Activated CD4-positive, alpha-beta memory T cell treated with anti-CD3 and anti-CD28 coated beads, Interleukin-2, amount 10 ng/mL, durations not matched to agents 7 days and 5 days (primary cell): ENCODE measurements at regions of chr5 and their contacts with region 1.

Region 1: DNA sequence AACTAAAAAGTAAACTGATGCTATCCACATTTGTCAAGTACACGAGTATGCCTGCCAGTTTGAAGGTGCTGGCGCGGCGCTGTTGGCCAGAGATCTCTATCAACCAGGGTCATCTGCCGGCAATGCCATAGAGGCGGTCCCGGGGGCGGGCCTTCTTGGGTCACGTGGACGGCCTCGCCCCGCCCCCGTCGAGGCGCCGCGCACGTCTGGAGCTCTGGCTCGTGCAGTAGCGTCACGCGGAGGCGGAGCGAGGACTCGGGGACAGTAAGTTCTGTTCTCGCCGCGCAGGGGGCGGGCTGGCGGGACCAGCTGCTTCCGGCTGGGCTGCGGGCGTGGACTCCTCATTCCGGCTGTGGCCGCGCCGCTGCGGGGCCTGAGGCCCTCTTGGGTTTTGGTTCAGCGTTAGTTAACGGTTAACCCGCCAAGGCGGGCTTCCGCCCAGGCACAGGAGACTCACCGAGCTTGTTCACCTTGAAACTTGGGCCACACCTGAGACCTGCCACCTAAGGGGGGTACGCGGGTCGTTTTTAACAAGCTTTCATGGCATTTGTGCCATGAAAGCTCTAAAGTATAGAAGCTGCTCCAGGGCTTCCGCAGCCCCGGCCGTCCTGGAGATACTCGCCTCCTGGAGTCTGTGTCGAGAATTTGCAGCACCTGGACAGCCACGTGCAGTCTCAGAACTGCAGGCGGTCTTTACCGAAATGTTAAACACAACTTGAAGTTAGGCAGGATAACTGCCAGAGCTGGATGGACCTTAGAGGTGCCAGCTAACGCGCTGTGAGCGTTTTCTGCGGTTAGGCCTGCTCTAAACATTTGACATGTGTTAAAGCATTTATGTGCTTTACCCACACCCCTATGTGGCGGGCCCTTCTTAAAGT is at the start of gene RFESD:
- DNase-seq: peak; percentile 98
- H3K4me3 Mint-ChIP-seq: peak within 1 kb of the TSS; percentile 79
- H3K27ac Mint-ChIP-seq: peak within 1 kb of the TSS; percentile 88
- H3K4me1 Mint-ChIP-seq: peaks cover 45% of the 10 kb centered on the region
- H3K27me3 Mint-ChIP-seq: no peaks in the 10 kb centered on the region
- total RNA-seq, gene RFESD: 5.4 to 6.4 TPM

Region 2: DNA sequence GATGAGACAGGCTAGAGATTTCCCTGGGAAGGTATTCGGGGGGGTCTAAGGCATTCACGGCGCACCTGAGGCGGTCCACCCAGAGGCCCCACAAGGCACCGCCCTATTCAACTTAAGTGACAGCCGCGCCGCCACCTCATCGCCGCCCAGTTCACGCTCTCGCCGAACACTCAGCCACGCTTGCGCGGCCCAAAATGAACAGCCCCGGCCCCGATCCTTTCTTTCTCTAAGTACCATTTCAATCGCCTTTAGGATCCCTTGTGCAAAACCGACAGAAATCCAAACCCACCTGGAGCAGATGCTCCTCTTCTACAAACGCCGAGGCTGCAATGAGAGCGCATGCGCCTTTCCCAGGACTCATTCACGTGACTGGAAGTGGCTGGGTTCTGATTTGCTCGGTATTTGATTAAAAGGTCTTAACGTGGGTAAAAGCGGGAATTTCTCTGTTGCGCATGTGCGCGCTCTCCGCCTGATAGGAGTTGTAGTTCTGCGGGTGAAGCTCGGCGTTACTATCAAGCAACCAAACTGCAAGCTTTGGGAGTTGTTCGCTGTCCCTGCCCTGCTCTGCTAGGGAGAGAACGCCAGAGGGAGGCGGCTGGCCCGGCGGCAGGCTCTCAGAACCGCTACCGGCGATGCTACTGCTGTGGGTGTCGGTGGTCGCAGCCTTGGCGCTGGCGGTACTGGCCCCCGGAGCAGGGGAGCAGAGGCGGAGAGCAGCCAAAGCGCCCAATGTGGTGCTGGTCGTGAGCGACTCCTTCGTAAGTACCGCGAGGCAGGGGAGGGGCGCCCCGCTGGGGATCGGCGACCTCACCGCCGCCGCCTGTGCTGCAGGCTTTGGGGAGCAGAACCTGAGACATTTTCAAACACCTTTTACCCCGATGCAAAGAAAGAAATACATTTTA is 91.9 kb before region 1 on chr5 and contains the starts of genes ARSK and SKIC3:
- CTCF ChIA-PET with region 1: interaction called, 5 read pairs
- POLR2A ChIA-PET with region 1: interaction called, 11 read pairs
- DNase-seq: peak; percentile 92
- H3K4me3 Mint-ChIP-seq: peak within 1 kb of the TSS; percentile 88
- H3K27ac Mint-ChIP-seq: peak within 1 kb of the TSS; percentile 74
- H3K4me1 Mint-ChIP-seq: peaks cover 42% of the 10 kb centered on the region
- H3K27me3 Mint-ChIP-seq: no peaks in the 10 kb centered on the region
- total RNA-seq, gene ARSK: 4.4 to 4.8 TPM
- total RNA-seq, gene SKIC3: 70.7 to 72.1 TPM

Region 3: DNA sequence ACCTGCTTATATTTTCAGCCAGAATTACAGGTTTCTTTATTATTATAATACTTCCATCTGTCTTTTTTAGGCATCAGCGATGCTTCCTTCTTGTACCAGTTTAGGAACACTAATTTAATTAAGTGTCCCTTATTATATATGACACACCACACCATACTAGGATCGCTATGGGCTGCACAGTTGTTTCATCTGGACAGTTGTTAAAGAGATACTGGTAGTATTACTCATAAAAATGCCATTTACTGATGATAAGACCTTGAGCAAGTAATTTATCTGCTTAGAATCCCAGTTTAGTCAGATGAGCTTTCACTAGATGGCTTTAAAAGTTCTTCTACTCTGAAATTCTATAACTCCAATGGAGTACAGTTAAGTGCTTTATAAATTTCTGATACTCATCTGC is 74.8 kb before region 1 on chr5:
- CTCF ChIA-PET with region 1: no interaction called
- POLR2A ChIA-PET with region 1: no interaction called
- DNase-seq: no peak
- H3K4me3 Mint-ChIP-seq: no peak overlapping the region
- H3K27ac Mint-ChIP-seq: no peak overlapping the region
- H3K4me1 Mint-ChIP-seq: no peaks in the 10 kb centered on the region
- H3K27me3 Mint-ChIP-seq: no peaks in the 10 kb centered on the region

Region 4: DNA sequence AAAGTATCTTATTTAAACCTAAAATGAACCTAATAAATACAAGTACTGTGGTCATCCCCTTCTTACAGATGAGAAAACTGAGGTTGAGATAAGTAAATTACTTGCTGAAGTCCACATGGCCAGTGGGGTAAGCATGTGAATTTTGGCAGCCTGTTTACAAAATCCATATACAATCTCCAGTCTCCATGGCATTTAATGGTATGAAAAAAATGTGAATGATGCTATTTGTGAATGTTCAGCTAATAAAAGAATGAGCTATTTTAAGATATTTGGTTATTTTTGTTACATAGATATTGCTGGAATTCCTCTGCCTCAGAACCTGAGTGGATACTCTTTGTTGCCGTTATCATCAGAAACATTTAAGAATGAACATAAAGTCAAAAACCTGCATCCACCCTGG is 46.2 kb before region 1 on chr5:
- CTCF ChIA-PET with region 1: no interaction called
- POLR2A ChIA-PET with region 1: no interaction called
- DNase-seq: no peak
- H3K4me3 Mint-ChIP-seq: no peak overlapping the region
- H3K27ac Mint-ChIP-seq: no peak overlapping the region
- H3K4me1 Mint-ChIP-seq: no peaks in the 10 kb centered on the region
- H3K27me3 Mint-ChIP-seq: no peaks in the 10 kb centered on the region

Region 5: GRCh38 chr5:95631991-95632675 is 14.7 kb before region 1 on chr5:
- CTCF ChIA-PET with region 1: interaction called, 13 read pairs
- POLR2A ChIA-PET with region 1: interaction called, 19 read pairs
- DNase-seq: peak; percentile 82
- H3K4me3 Mint-ChIP-seq: peak overlapping the region; percentile 1
- H3K27ac Mint-ChIP-seq: peak overlapping the region; percentile 95
- H3K4me1 Mint-ChIP-seq: peaks cover 23% of the 10 kb centered on the region
- H3K27me3 Mint-ChIP-seq: peaks cover 12% of the 10 kb centered on the region

Region 6: GRCh38 chr5:95672486-95673469 is 26.0 kb after region 1 on chr5:
- CTCF ChIA-PET with region 1: no interaction called
- POLR2A ChIA-PET with region 1: no interaction called
- DNase-seq: no peak
- H3K4me3 Mint-ChIP-seq: no peak overlapping the region
- H3K27ac Mint-ChIP-seq: no peak overlapping the region
- H3K4me1 Mint-ChIP-seq: peaks cover 3% of the 10 kb centered on the region
- H3K27me3 Mint-ChIP-seq: peaks cover 21% of the 10 kb centered on the region

Region 7: GRCh38 chr5:95760273-95761191 is 113.7 kb after region 1 on chr5:
- CTCF ChIA-PET with region 1: interaction called, 7 read pairs
- POLR2A ChIA-PET with region 1: interaction called, 10 read pairs
- DNase-seq: no peak
- H3K4me3 Mint-ChIP-seq: peak overlapping the region; percentile 72
- H3K27ac Mint-ChIP-seq: peak overlapping the region; percentile 84
- H3K4me1 Mint-ChIP-seq: peaks cover 32% of the 10 kb centered on the region
- H3K27me3 Mint-ChIP-seq: peaks cover 16% of the 10 kb centered on the region

Region 8: GRCh38 chr5:95822542-95823181 is 175.9 kb after region 1 on chr5 and contains the start of gene GLRX:
- CTCF ChIA-PET with region 1: interaction called, 9 read pairs
- POLR2A ChIA-PET with region 1: interaction called, 23 read pairs
- DNase-seq: peak; percentile 72
- H3K4me3 Mint-ChIP-seq: peak within 1 kb of the TSS; percentile 91
- H3K27ac Mint-ChIP-seq: peak within 1 kb of the TSS; percentile 88
- H3K4me1 Mint-ChIP-seq: peaks cover 71% of the 10 kb centered on the region
- H3K27me3 Mint-ChIP-seq: no peaks in the 10 kb centered on the region
- total RNA-seq, gene GLRX: 71.6 to 72.5 TPM

Region 9: GRCh38 chr5:95846554-95847260 is 199.9 kb after region 1 on chr5:
- CTCF ChIA-PET with region 1: interaction called, 14 read pairs
- POLR2A ChIA-PET with region 1: interaction called, 8 read pairs
- DNase-seq: peak; percentile 72
- H3K4me3 Mint-ChIP-seq: no peak overlapping the region
- H3K27ac Mint-ChIP-seq: no peak overlapping the region
- H3K4me1 Mint-ChIP-seq: peaks cover 38% of the 10 kb centered on the region
- H3K27me3 Mint-ChIP-seq: peaks cover 10% of the 10 kb centered on the region